Caco-2 (cell line): ENCODE measurements at regions of chr17 and their contacts with region 1.

Region 1: GRCh38 chr17:48215583-48216139 is 108.1 kb downstream of the SNX11 start:
- DNase-seq: peak; percentile 79 to 86
- H3K4me3 ChIP-seq: no peak overlapping the region
- H3K4me3 Mint-ChIP-seq: no peak overlapping the region
- H3K27ac Mint-ChIP-seq: no peak overlapping the region
- H3K4me1 ChIP-seq: peaks cover 9% of the 10 kb centered on the region; the same call in 1 of the 2 replicates
- H3K4me1 Mint-ChIP-seq: peaks cover 5% of the 10 kb centered on the region
- H3K27me3 ChIP-seq: no peaks in the 10 kb centered on the region
- H3K27me3 Mint-ChIP-seq: no peaks in the 10 kb centered on the region
- CTCF ChIP-seq: peak; percentile 97 to 98

Region 2: GRCh38 chr17:47957591-47958428 is 257.9 kb before region 1 on chr17 and contains the start of gene PRR15L:
- CTCF ChIA-PET with region 1: no interaction called
- POLR2A ChIA-PET with region 1: no interaction called
- intact Hi-C with region 1: no loop called
- DNase-seq: peak; percentile 89 to 93
- H3K4me3 ChIP-seq: peak within 1 kb of the TSS; percentile 59
- H3K4me3 Mint-ChIP-seq: peak within 1 kb of the TSS; percentile 67
- H3K27ac Mint-ChIP-seq: peak within 1 kb of the TSS; percentile 35
- H3K4me1 ChIP-seq: peaks cover 67% of the 10 kb centered on the region
- H3K4me1 Mint-ChIP-seq: peaks cover 53% of the 10 kb centered on the region
- H3K27me3 ChIP-seq: no peaks in the 10 kb centered on the region
- H3K27me3 Mint-ChIP-seq: no peaks in the 10 kb centered on the region
- CTCF ChIP-seq: no peak
- total RNA-seq, gene PRR15L: 24.3 and 30.5 TPM in 2 replicates

Region 3: GRCh38 chr17:48153691-48154358 is 61.8 kb before region 1 on chr17:
- CTCF ChIA-PET with region 1: interaction called, 10 read pairs
- POLR2A ChIA-PET with region 1: no interaction called
- intact Hi-C with region 1: loop called (anchors 1 kb)
- DNase-seq: peak; percentile 80 to 88
- H3K4me3 ChIP-seq: no peak overlapping the region
- H3K4me3 Mint-ChIP-seq: peak overlapping the region; percentile 28
- H3K27ac Mint-ChIP-seq: no peak overlapping the region
- H3K4me1 ChIP-seq: peaks cover 10% of the 10 kb centered on the region
- H3K4me1 Mint-ChIP-seq: peaks cover 14% of the 10 kb centered on the region
- H3K27me3 ChIP-seq: peaks cover 2% of the 10 kb centered on the region; the same call in 1 of the 2 replicates
- H3K27me3 Mint-ChIP-seq: peaks cover 15% of the 10 kb centered on the region
- CTCF ChIP-seq: peak; percentile 88 to 93

Region 4: GRCh38 chr17:48307814-48308411 is 92.3 kb after region 1 on chr17:
- CTCF ChIA-PET with region 1: interaction called, 50 read pairs
- POLR2A ChIA-PET with region 1: no interaction called
- intact Hi-C with region 1: loop called (anchors 1 kb)
- DNase-seq: peak; percentile 83
- H3K4me3 ChIP-seq: no peak overlapping the region
- H3K4me3 Mint-ChIP-seq: no peak overlapping the region
- H3K27ac Mint-ChIP-seq: no peak overlapping the region
- H3K4me1 ChIP-seq: peaks cover 15% of the 10 kb centered on the region
- H3K4me1 Mint-ChIP-seq: peaks cover 14% of the 10 kb centered on the region
- H3K27me3 ChIP-seq: no peaks in the 10 kb centered on the region
- H3K27me3 Mint-ChIP-seq: peaks cover 16% of the 10 kb centered on the region
- CTCF ChIP-seq: peak; percentile 99 to 100

Region 5: GRCh38 chr17:48374650-48375230 is 159.1 kb after region 1 on chr17:
- CTCF ChIA-PET with region 1: interaction called, 6 read pairs
- POLR2A ChIA-PET with region 1: no interaction called
- intact Hi-C with region 1: loop called (anchors 1 kb)
- DNase-seq: peak; percentile 81 to 88
- H3K4me3 ChIP-seq: no peak overlapping the region
- H3K4me3 Mint-ChIP-seq: no peak overlapping the region
- H3K27ac Mint-ChIP-seq: no peak overlapping the region
- H3K4me1 ChIP-seq: no peaks in the 10 kb centered on the region
- H3K4me1 Mint-ChIP-seq: no peaks in the 10 kb centered on the region
- H3K27me3 ChIP-seq: no peaks in the 10 kb centered on the region; the same call in 1 of the 2 replicates
- H3K27me3 Mint-ChIP-seq: peaks cover 2% of the 10 kb centered on the region
- CTCF ChIP-seq: peak; percentile 98

Region 6: DNA sequence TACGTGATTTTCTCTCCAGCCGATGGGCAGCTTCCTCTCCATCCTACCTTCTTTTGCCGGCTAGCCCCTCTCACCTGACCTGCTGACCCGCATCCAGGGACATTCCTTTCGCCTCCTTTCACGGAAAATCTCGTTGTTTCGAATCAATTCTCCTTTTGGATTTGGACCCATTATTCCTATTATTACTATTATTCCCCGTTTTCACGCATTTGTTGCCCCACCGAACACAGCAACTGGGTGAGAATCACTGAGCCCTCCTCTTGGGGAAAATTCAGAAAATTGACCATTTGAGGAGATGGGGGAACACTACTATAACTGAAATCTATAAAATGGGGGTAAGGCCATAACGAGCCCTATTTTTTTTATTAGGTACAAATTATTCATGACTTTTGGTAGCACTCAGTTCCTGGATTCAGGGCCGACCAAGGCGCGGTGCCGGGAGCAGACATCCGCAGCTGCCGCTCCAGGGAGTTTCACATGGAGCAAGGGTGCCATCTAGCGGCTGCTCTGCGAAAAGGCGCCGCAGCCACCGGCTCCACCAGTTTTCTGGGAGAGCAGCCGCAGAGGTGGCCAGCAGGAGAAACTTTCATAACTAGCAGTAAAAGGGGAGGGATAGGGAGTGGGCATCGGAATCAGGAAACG is 402.7 kb after region 1 on chr17:
- CTCF ChIA-PET with region 1: interaction called, 8 read pairs
- POLR2A ChIA-PET with region 1: no interaction called
- intact Hi-C with region 1: loop called (anchors 1 kb)
- DNase-seq: peak; percentile 93 to 98
- H3K4me3 ChIP-seq: peak overlapping the region; percentile 33
- H3K4me3 Mint-ChIP-seq: peak overlapping the region; percentile 63
- H3K27ac Mint-ChIP-seq: peak overlapping the region; percentile 59
- H3K4me1 ChIP-seq: peaks cover 4% of the 10 kb centered on the region
- H3K4me1 Mint-ChIP-seq: peaks cover 33% of the 10 kb centered on the region
- H3K27me3 ChIP-seq: peaks cover 27% of the 10 kb centered on the region
- H3K27me3 Mint-ChIP-seq: peaks cover 69% of the 10 kb centered on the region
- CTCF ChIP-seq: peak; percentile 100